ENCODE measurements at regions of chr1 and their contacts with region 1.

Region 1: GRCh38 chr1:43934101-43934985 is 742 bp downstream of the ARTN start:
- DNase-seq: peak; percentile 68
- H3K4me3 Mint-ChIP-seq: peak overlapping the region; percentile 34
- H3K27ac Mint-ChIP-seq: no peak overlapping the region
- H3K4me1 Mint-ChIP-seq: peaks cover 34% of the 10 kb centered on the region
- H3K27me3 Mint-ChIP-seq: no peaks in the 10 kb centered on the region
- CTCF ChIP-seq: peak; percentile 92

Region 2: DNA sequence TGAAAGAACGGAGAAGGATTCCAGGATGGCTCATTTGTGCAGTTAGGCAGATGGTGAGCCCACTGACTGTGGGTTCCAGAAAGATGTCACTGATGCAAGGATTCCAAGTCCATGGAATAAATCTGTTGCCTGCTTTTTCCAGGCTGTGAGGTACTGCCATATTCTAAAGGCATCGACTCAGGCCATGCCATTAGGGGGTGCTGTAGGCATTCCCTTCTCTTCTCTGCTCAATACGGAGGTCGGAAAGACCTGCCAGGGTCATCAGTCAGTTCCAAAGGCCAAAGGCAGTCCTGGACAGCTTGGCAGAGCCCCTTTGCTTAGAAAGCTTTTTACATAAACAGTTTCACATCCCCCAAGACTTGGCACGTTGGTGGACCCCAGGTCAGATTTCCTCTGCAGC is 696.3 kb before region 1 on chr1:
- CTCF ChIA-PET with region 1: no interaction called
- POLR2A ChIA-PET with region 1: no interaction called
- intact Hi-C with region 1: loop called (anchors 10 kb)
- DNase-seq: peak; percentile 78
- H3K4me3 Mint-ChIP-seq: no peak overlapping the region
- H3K27ac Mint-ChIP-seq: peak overlapping the region; percentile 3
- H3K4me1 Mint-ChIP-seq: peaks cover 21% of the 10 kb centered on the region
- H3K27me3 Mint-ChIP-seq: no peaks in the 10 kb centered on the region
- CTCF ChIP-seq: peak; percentile 53

Region 3: GRCh38 chr1:43853161-43853921 is 81.0 kb before region 1 on chr1:
- CTCF ChIA-PET with region 1: interaction called, 16 read pairs
- POLR2A ChIA-PET with region 1: interaction called, 3 read pairs
- intact Hi-C with region 1: loop called (anchors 10 kb)
- DNase-seq: peak; percentile 85
- H3K4me3 Mint-ChIP-seq: no peak overlapping the region
- H3K27ac Mint-ChIP-seq: no peak overlapping the region
- H3K4me1 Mint-ChIP-seq: peaks cover 36% of the 10 kb centered on the region
- H3K27me3 Mint-ChIP-seq: no peaks in the 10 kb centered on the region
- CTCF ChIP-seq: no peak

Region 4: DNA sequence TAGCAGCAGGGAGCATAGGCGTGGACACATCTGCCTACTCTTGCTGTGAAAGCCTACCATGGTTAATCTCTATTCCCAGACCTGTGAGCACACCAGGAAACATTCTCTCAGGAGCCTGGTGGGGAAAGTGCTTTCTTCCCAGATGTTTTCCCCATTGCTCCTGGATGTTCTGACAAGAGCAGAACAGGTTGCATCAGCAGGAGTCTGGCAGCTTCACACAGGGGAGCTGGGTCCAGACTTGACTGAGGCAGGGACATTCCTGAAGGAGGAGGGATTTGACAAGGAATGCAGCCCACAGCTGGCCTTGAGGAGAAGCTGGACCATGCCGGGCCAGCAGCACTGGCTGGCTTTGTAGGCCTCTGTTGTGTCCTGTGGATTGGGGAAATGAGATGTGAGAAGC is 21.7 kb before region 1 on chr1:
- CTCF ChIA-PET with region 1: interaction called, 39 read pairs
- POLR2A ChIA-PET with region 1: interaction called, 13 read pairs
- intact Hi-C with region 1: loop called (anchors 1 kb)
- DNase-seq: peak; percentile 69
- H3K4me3 Mint-ChIP-seq: no peak overlapping the region
- H3K27ac Mint-ChIP-seq: peak overlapping the region; percentile 68
- H3K4me1 Mint-ChIP-seq: peaks cover 24% of the 10 kb centered on the region
- H3K27me3 Mint-ChIP-seq: no peaks in the 10 kb centered on the region
- CTCF ChIP-seq: no peak

Region 5: DNA sequence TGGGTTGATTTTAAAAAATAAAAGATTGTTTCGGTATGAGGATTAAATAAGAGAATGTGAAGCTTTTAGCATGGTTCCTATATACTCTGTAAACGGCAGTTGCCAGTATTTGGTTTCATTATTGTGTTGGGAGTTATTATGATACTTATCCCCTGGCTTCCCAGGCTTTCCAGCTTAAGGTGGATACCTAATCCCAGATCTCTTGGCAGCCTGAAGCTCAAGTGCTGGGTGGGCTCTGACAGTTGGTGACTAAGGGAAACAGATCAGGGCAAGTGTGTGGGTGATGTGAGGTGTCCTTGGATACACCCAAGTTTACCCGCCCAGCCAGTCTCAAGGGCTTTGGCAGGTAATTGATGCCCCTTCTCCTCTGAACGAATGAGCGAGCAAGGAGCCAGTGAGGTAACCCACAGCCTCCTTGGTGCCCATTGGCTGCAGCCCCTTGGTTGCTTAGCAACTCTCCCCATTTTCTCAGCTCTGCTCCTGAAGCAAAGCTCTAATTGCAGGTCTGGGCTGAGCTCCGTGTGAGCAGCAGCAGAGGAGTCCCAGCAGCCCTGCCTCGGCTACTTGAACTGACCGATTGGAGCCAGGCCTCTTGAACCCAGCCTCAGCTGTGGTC is 18.5 kb after region 1 on chr1:
- CTCF ChIA-PET with region 1: interaction called, 16 read pairs
- POLR2A ChIA-PET with region 1: interaction called, 4 read pairs
- intact Hi-C with region 1: no loop called
- DNase-seq: no peak
- H3K4me3 Mint-ChIP-seq: no peak overlapping the region
- H3K27ac Mint-ChIP-seq: no peak overlapping the region
- H3K4me1 Mint-ChIP-seq: peaks cover 17% of the 10 kb centered on the region
- H3K27me3 Mint-ChIP-seq: no peaks in the 10 kb centered on the region
- CTCF ChIP-seq: no peak